ENCODE measurements at regions of chr6 and their contacts with region 1.

Region 1: DNA sequence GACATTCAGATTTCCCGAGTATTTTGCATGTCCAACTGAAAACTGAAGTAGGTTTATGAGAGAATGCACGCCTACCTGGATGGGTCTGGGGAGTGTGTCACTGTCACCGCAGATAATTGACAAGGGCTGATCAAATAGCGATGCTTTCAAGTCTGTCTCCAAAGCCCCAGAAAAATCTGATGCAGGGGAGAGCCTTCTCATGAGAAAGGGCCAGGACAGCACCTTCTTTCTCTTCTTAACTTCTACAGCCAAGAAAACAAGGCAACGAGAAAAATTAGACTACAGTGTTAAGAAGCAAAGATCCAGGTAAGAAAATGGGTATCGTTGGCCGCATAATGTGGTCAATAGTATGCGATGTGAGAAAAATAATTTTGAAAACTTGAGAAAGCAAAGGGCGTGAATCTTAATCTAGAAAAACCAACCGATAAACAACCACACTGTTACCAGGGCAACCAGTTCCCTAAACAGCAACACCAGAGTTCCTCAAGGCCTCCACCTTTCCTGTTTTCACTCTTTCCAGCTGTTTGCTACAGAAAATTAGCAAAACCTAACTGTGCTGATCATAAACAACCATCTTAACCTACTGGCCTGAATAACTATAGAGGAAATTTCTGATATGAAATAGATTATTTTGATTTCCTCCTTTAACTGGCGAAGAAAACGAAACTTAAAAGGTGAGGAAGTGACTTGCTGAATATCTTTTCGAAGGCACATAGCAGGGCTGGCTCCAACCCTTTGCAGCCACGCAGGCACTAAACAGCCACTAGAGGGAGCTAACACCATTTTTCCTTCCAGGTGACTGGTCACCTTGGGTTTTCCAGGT is 2.6 kb downstream of the TAGAP start:
- DNase-seq: peak; percentile 42 to 92 (median 86)
- ATAC-seq: peak; percentile 70
- H3K4me3 ChIP-seq: peak overlapping the region; percentile 88
- H3K4me3 Mint-ChIP-seq: peak overlapping the region; percentile 92 to 100 (median 99)
- H3K27ac ChIP-seq: peak overlapping the region; percentile 92
- H3K27ac Mint-ChIP-seq: peak overlapping the region; percentile 94 to 100 (median 98)
- H3K4me1 ChIP-seq: peaks cover 50 to 58% of the 10 kb centered on the region in 2 donors
- H3K4me1 Mint-ChIP-seq: peaks cover 44 to 68% (median 64%) of the 10 kb centered on the region in 7 donors
- H3K27me3 ChIP-seq: no peaks in the 10 kb centered on the region
- H3K27me3 Mint-ChIP-seq: no peaks in the 10 kb centered on the region

Region 2: GRCh38 chr6:157823001-157823527 is 1219.2 kb before region 1 on chr6 and contains the start of gene SNX9:
- CTCF ChIA-PET with region 1: no interaction called
- POLR2A ChIA-PET with region 1: no interaction called
- intact Hi-C with region 1: loop called in 1 of 2 experiments (anchors 5 kb)
- DNase-seq: peak in 8 of 9 donors; percentile 27 to 74 (median 56)
- ATAC-seq: peak; percentile 77
- H3K4me3 ChIP-seq: peak within 1 kb of the TSS; percentile 60
- H3K4me3 Mint-ChIP-seq: peak within 1 kb of the TSS; percentile 88 to 100 (median 96)
- H3K27ac ChIP-seq: peak within 1 kb of the TSS; percentile 96
- H3K27ac Mint-ChIP-seq: peak within 1 kb of the TSS; percentile 95 to 100 (median 99)
- H3K4me1 ChIP-seq: peaks cover 9 to 16% of the 10 kb centered on the region in 2 donors
- H3K4me1 Mint-ChIP-seq: peaks cover 15 to 70% (median 57%) of the 10 kb centered on the region in 7 donors
- H3K27me3 ChIP-seq: no peaks in the 10 kb centered on the region
- H3K27me3 Mint-ChIP-seq: peaks cover 0 to 42% (median 0%) of the 10 kb centered on the region in 5 donors
- total RNA-seq, gene SNX9: 13.4 to 39.2 (median 36.4) TPM

Region 3: DNA sequence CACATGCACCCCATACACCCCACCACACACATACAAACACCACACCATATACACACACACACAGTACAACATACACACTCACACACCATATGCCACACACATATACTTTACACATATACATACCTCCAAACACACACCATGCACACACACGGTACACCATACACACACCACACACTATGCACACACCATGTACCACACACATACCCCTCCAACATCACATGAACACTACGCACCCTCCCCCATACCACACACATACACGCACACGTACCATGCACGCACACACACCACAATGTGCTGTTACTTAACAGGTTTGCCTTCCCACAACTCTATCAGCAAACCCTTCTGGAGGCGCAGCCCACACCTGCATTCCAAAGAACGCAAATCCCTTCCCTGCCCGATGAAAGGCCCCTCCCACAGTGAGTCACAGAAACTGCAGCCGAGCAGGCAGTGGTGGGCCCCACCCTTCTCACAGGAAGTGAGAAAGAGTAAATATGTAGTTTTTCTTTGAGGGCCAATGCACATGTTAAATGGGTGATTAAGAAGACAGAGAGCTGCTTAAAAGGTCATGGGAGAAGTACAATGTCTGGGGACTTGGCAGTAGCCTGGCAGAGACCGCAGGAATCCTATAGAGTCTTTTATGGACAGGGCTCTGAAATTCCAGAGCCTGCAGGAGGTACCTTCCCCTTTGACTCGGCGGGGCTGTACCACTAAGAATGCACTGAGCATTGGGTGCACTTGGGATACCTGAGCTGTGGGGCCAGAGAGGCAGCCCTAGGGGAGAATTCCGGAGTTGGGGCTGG is 188.9 kb before region 1 on chr6:
- CTCF ChIA-PET with region 1: no interaction called
- POLR2A ChIA-PET with region 1: interaction called, 5 read pairs
- intact Hi-C with region 1: loop called (anchors 1 to 5 kb)
- DNase-seq: peak; percentile 54 to 93 (median 86)
- ATAC-seq: peak; percentile 79
- H3K4me3 ChIP-seq: peak overlapping the region; percentile 55
- H3K4me3 Mint-ChIP-seq: no peak overlapping the region
- H3K27ac ChIP-seq: peak overlapping the region; percentile 83
- H3K27ac Mint-ChIP-seq: no peak overlapping the region
- H3K4me1 ChIP-seq: peaks cover 47 to 55% of the 10 kb centered on the region in 2 donors
- H3K4me1 Mint-ChIP-seq: peaks cover 16 to 42% (median 33%) of the 10 kb centered on the region in 7 donors
- H3K27me3 ChIP-seq: no peaks in the 10 kb centered on the region
- H3K27me3 Mint-ChIP-seq: no peaks in the 10 kb centered on the region

Region 4: DNA sequence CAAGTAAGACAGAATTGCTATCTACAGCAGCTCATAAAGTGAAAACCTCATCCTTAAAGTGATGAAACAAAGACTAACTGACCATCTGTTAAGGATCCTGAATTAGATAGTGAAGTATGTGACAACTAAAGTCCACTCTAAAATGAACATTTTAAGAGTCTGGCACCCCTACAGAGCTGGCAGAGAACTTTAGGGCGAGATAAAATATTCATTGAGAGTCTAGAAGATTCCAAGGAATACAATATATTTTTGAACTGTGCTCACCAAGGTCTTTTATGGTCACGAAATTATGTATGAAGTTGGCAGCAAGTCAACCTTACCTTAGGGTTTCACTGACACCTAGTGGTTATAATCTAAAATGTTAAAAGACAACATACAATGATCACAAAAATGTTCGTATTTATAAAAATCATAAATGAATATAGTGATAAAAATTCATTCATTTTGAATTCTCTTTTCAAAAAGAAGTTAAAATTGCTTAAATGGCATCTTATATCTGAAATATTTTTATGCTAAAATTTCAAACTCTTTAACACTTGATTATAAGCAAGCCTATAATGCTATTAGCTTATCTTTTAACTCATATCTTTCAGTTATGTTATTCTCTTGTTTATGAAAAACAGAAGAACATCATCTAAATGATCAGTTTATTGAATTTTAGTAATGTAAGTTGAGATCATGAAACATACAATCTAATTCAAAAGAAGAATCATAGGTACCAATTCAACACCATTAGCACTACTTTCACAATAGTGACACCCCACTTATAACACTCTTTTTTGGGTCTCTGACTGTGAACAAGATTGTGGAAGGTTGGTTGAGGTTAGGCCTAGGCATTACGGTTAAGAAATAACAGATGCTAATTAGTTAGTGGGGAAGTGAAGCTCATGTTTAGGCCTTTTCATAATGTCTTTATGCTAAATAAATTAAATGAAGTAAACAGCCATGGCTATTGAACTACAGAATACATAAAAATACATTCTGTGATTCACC is 69.7 kb before region 1 on chr6:
- CTCF ChIA-PET with region 1: no interaction called
- POLR2A ChIA-PET with region 1: no interaction called
- intact Hi-C with region 1: no loop called
- DNase-seq: peak in 6 of 9 donors; percentile 41 to 68 (median 60)
- ATAC-seq: peak; percentile 75
- H3K4me3 ChIP-seq: no peak overlapping the region
- H3K4me3 Mint-ChIP-seq: no peak overlapping the region
- H3K27ac ChIP-seq: no peak overlapping the region
- H3K27ac Mint-ChIP-seq: no peak overlapping the region
- H3K4me1 ChIP-seq: no peaks in the 10 kb centered on the region
- H3K4me1 Mint-ChIP-seq: peaks cover 0 to 6% (median 0%) of the 10 kb centered on the region in 7 donors
- H3K27me3 ChIP-seq: no peaks in the 10 kb centered on the region
- H3K27me3 Mint-ChIP-seq: peaks cover 0 to 6% (median 0%) of the 10 kb centered on the region in 5 donors

Region 5: GRCh38 chr6:159008656-159009288 is 33.4 kb before region 1 on chr6:
- CTCF ChIA-PET with region 1: interaction called, 67 read pairs
- POLR2A ChIA-PET with region 1: interaction called, 4 read pairs
- intact Hi-C with region 1: loop called (anchors 1 kb)
- DNase-seq: peak in 8 of 9 donors; percentile 7 to 64 (median 56)
- ATAC-seq: peak; percentile 79
- H3K4me3 ChIP-seq: no peak overlapping the region
- H3K4me3 Mint-ChIP-seq: peak overlapping the region in 1 of 10 donors; percentile 16
- H3K27ac ChIP-seq: no peak overlapping the region
- H3K27ac Mint-ChIP-seq: peak overlapping the region in 1 of 9 donors; percentile 60
- H3K4me1 ChIP-seq: peaks cover 14 to 22% of the 10 kb centered on the region in 2 donors
- H3K4me1 Mint-ChIP-seq: peaks cover 17 to 44% (median 27%) of the 10 kb centered on the region in 7 donors
- H3K27me3 ChIP-seq: no peaks in the 10 kb centered on the region
- H3K27me3 Mint-ChIP-seq: no peaks in the 10 kb centered on the region

Region 6: GRCh38 chr6:159062564-159062945 is 20.3 kb after region 1 on chr6:
- CTCF ChIA-PET with region 1: interaction called, 21 read pairs
- POLR2A ChIA-PET with region 1: interaction called, 148 read pairs
- intact Hi-C with region 1: loop called (anchors 1 kb)
- DNase-seq: peak in 7 of 9 donors; percentile 75 to 89 (median 85)
- ATAC-seq: peak; percentile 92
- H3K4me3 ChIP-seq: peak overlapping the region; percentile 14
- H3K4me3 Mint-ChIP-seq: peak overlapping the region; percentile 66 to 84 (median 74)
- H3K27ac ChIP-seq: peak overlapping the region; percentile 79
- H3K27ac Mint-ChIP-seq: peak overlapping the region; percentile 96 to 99 (median 98)
- H3K4me1 ChIP-seq: peaks cover 52 to 54% of the 10 kb centered on the region in 2 donors
- H3K4me1 Mint-ChIP-seq: peaks cover 60 to 88% (median 86%) of the 10 kb centered on the region in 7 donors
- H3K27me3 ChIP-seq: no peaks in the 10 kb centered on the region
- H3K27me3 Mint-ChIP-seq: no peaks in the 10 kb centered on the region

Region 7: DNA sequence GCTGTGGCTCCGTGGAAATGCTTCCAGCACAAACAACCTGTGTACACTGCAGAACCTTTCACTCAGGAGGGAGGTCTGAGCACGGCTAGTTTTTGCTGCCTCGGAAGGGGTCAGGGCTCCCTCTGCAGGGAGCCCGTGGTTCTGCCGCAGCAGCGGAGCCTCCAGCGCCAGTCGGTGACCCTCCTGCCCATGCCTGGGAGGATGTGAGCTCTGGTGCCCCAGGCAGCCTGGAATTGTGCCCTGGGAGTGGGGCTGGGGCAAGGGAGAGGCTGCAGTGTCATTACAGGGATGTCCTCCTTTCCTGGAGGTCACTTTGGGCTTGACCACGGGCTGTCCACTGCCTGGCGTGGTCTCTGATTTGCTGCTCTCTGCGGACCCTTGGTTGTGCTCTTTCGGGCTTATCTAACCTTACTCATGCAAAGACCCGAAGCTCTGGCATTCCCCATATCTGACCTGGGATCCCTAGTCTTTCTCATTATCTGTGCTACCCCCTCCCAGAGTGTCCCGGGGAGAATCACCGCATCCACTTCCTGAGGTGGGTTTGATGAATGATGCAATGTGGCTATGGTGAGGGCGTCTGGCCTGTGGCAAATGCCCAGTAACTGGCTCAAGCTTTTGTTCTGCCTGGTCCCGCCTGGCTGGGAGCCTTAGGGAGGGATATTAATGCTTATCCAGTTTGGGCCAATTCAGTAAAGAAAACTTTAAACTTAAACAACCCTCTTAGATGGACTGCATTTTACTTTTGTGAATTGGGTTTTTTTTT is 62.1 kb after region 1 on chr6:
- CTCF ChIA-PET with region 1: interaction called, 190 read pairs
- POLR2A ChIA-PET with region 1: interaction called, 267 read pairs
- intact Hi-C with region 1: loop called (anchors 1 kb)
- DNase-seq: peak; percentile 68 to 81 (median 77)
- ATAC-seq: peak; percentile 79
- H3K4me3 ChIP-seq: peak overlapping the region; percentile 5
- H3K4me3 Mint-ChIP-seq: peak overlapping the region in 9 of 10 donors; percentile 40 to 69 (median 54)
- H3K27ac ChIP-seq: peak overlapping the region; percentile 79
- H3K27ac Mint-ChIP-seq: peak overlapping the region; percentile 82 to 98 (median 91)
- H3K4me1 ChIP-seq: peaks cover 58 to 73% of the 10 kb centered on the region in 2 donors
- H3K4me1 Mint-ChIP-seq: peaks cover 58 to 96% (median 86%) of the 10 kb centered on the region in 7 donors
- H3K27me3 ChIP-seq: no peaks in the 10 kb centered on the region
- H3K27me3 Mint-ChIP-seq: no peaks in the 10 kb centered on the region

Measured in naive thymus-derived CD4-positive, alpha-beta T cell (primary cell).